Transverse colon (tissue), 4 donors: ENCODE measurements at regions of chr9 and their contacts with region 1.

Region 1: GRCh38 chr9:73178044-73178443 is 26.4 kb downstream of the ANXA1 start:
- DNase-seq: no peak
- H3K4me3 ChIP-seq: no peak overlapping the region
- H3K27ac ChIP-seq: no peak overlapping the region
- H3K4me1 ChIP-seq: no peaks in the 10 kb centered on the region
- H3K27me3 ChIP-seq: no peaks in the 10 kb centered on the region
- CTCF ChIP-seq: no peak
- EP300 ChIP-seq: no peak
- POLR2A ChIP-seq: no peak

Region 2: DNA sequence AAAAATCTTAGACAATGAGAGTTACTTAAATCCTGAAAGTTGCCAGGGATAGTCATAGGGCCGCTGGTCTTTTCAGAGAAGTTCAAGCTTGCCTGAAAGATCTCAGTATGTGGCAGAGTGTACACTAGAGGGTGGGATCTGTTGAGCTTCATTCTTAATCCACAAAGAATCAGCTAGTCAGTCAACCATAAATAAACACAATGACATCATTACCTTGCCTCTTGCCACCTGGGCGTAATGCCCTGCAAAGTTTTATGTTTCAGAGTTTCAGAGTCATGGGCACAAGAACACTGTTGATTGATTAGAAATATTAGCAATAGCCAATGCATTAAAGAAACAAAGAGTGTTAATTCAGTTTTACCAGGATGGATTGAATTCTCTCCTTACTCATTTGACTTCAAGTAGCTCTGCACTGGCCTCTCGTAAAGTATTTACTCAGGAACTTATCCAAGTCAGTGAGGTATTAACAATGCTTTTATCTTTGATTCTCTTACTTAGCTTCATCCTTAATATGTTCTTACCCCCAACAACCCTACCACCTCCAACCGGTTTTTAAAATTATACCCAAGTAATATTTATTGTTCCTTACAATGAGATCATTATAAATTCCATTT is 40.7 kb before region 1 on chr9:
- in situ Hi-C with region 1: no loop called
- intact Hi-C with region 1: loop called (anchors 1 kb)
- DNase-seq: no peak
- H3K4me3 ChIP-seq: no peak overlapping the region
- H3K27ac ChIP-seq: no peak overlapping the region
- H3K4me1 ChIP-seq: peaks cover 0 to 11% (median 3%) of the 10 kb centered on the region in 4 donors
- H3K27me3 ChIP-seq: no peaks in the 10 kb centered on the region
- CTCF ChIP-seq: no peak
- EP300 ChIP-seq: no peak
- POLR2A ChIP-seq: no peak